ENCODE measurements at regions of chr7 and their contacts with region 1.

Region 1: GRCh38 chr7:100435401-100436304 is 644 bp downstream of the PPP1R35 start:
- DNase-seq: no peak
- ATAC-seq: peak; percentile 33 to 42
- H3K4me3 ChIP-seq: peak overlapping the region; percentile 78 to 86 (median 81)
- H3K27ac ChIP-seq: peak overlapping the region; percentile 85 to 92 (median 90)
- H3K4me1 ChIP-seq: peaks cover 31% of the 10 kb centered on the region in 2 donors
- H3K27me3 ChIP-seq: no peaks in the 10 kb centered on the region
- CTCF ChIP-seq: no peak
- POLR2A ChIP-seq: no peak

Region 2: DNA sequence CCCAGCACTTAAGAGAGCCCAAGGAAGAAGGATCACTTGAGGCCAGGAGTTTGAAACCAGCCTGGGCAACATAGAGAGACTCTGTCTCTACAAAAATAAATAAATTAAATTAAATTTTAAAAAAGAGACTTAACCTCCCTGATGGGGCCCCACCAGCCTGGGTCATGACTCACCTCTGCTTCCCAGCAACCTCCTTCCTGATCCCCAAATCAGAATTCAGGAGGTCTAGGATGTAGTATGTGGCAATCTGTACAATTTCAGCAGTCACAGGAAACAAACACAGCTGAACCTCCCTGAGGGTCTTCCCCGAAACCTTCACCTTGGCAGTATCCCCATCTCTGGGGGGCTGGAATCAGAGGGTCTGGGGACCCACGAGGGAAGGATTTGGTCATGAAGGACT is 10.4 kb after region 1 on chr7:
- in situ Hi-C with region 1: no loop called
- intact Hi-C with region 1: loop called (anchors 1 kb)
- DNase-seq: no peak
- ATAC-seq: no peak
- H3K4me3 ChIP-seq: no peak overlapping the region
- H3K27ac ChIP-seq: peak overlapping the region in 2 of 4 donors; percentile 22 to 63
- H3K4me1 ChIP-seq: peaks cover 0 to 3% of the 10 kb centered on the region in 2 donors
- H3K27me3 ChIP-seq: no peaks in the 10 kb centered on the region
- CTCF ChIP-seq: no peak
- POLR2A ChIP-seq: no peak

Region 3: GRCh38 chr7:100489824-100490223 is 54.2 kb after region 1 on chr7:
- in situ Hi-C with region 1: no loop called
- intact Hi-C with region 1: no loop called
- DNase-seq: no peak
- ATAC-seq: no peak
- H3K4me3 ChIP-seq: no peak overlapping the region
- H3K27ac ChIP-seq: no peak overlapping the region
- H3K4me1 ChIP-seq: no peaks in the 10 kb centered on the region
- H3K27me3 ChIP-seq: peaks cover 0 to 15% (median 0%) of the 10 kb centered on the region in 3 donors
- CTCF ChIP-seq: no peak
- POLR2A ChIP-seq: no peak

Measured in gastrocnemius medialis (tissue), 4 donors.